ENCODE measurements at regions of chr3 and their contacts with region 1.

Region 1: DNA sequence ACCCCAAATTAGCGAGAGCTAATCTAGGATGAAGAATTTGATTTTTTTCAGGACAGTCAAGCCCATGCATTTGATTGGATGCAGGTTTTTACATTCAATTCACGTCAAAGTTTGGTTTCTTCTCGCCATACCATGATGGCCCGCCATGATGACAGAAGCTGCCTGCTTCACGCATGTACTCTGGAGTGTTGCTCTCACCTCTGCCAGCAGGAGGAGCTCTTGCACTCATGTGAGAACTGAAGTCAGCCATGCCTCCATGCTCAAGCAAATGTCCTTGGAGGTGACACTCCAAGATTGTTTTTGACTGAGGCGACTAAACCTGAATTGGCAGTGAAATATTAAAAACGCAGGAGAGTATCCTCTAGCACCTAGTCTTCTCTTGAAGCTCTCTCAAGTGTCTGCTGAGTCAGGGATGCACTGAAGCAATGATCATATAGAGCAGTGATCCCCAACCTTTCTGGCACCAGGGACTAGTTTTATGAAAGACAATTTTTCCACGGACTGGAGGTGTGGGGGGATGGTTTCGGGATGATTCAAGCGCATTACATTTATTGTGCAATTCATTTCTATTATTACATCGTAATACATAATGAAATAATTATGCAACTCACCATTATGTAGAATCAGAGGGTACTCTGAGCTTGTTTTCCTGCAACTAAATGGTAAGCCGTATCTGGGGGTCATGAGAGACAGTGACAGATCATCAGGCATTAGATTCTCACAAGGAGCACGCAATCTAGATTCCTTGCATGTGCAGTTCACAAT is 121.0 kb downstream of the SAMMSON start:
- DNase-seq: peak; percentile 79 to 94
- H3K4me3 ChIP-seq: no peak overlapping the region
- H3K4me1 ChIP-seq: peaks cover 7% of the 10 kb centered on the region
- H3K27me3 ChIP-seq: no peaks in the 10 kb centered on the region

Region 2: GRCh38 chr3:70358978-70359580 is 238.5 kb after region 1 on chr3:
- in situ Hi-C with region 1: loop called (anchors 25 kb)
- DNase-seq: peak; percentile 48 to 56
- H3K4me3 ChIP-seq: no peak overlapping the region
- H3K4me1 ChIP-seq: no peaks in the 10 kb centered on the region
- H3K27me3 ChIP-seq: no peaks in the 10 kb centered on the region

Measured in HAP-1 (cell line).